ENCODE measurements at regions of chr2 and their contacts with region 1.

Region 1: DNA sequence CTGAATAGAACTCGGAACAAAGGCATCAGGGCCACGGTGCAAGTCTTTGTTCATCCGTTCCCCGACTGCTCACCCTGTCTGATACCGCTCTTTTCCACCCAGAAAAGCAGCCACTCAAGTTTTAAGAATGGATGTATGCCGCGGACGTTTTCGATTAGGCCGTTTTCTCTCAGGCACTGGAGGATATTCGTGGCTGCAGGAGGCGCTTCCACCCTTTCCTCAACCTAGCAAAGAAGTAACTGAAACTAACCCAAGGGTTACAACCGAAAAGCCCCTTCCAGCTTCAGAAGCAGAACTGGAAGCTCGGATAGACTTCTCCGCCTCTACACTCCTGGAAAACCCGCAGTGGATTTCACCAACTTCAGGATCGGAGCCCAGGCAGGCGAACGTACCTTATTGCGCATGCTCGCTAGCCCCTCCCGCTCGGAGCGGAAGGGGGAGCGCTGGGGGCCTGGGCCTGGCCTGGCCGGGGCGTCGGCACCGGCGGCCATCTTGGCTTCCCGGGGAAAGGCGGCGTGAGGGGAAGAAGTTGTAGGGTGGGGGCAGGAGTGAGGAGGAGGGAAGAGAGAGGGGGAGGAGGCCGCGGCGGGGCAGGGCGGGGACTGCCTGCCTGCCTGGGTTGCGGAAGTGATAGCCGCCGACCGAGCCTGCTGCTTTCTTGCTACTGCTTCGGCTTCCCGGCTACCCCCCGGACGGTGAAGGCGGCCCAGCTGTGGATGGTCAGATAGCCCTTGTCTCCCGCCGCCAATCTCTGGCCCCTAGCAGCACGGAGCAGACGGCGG is at the start of gene ACTR3:
- DNase-seq: peak; percentile 99
- H3K4me3 Mint-ChIP-seq: peak within 1 kb of the TSS; percentile 89
- H3K27ac Mint-ChIP-seq: peak within 1 kb of the TSS; percentile 94
- H3K4me1 Mint-ChIP-seq: peaks cover 70% of the 10 kb centered on the region
- H3K27me3 Mint-ChIP-seq: no peaks in the 10 kb centered on the region
- total RNA-seq, gene ACTR3: 653 to 668 TPM

Region 2: DNA sequence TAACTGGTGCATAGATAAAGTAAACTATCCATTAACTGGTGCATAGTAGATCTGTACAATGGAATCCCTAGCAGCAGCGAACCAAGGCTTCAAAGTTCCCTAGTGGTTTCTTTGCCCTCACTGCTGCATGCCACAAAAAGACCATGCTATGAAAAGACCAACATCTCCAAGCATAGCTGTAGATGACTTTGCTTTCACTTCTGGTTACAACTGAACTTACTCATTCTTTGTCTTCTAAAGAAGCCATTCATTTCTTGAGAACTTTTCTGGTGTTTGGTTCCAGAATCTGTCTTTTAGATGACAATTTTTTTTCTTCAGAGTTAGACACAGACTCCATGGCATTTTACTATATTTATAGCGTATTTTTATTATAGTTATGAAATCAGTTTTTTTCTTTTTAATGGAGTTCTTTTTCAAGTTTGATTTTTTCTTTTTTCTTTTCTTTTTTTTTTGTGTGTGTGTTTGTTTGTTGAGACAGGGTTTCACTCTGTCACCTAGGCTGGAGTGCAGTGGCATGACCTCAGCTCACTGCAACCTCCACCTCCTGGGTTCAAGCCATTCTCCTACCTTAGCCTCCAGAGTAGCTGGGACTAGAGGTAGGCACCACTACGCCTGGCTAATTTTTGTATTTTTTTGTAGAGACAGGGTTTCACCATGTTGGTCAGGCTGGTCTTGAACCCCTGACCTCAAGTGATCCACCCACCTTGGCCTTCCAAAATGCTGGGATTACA is 196.8 kb before region 1 on chr2:
- CTCF ChIA-PET with region 1: no interaction called
- POLR2A ChIA-PET with region 1: no interaction called
- intact Hi-C with region 1: loop called (anchors 1 kb)
- DNase-seq: peak; percentile 63
- H3K4me3 Mint-ChIP-seq: peak overlapping the region; percentile 71
- H3K27ac Mint-ChIP-seq: peak overlapping the region; percentile 95
- H3K4me1 Mint-ChIP-seq: peaks cover 42% of the 10 kb centered on the region
- H3K27me3 Mint-ChIP-seq: no peaks in the 10 kb centered on the region

Region 3: GRCh38 chr2:113791697-113792590 is 97.7 kb before region 1 on chr2:
- CTCF ChIA-PET with region 1: interaction called, 3 read pairs
- POLR2A ChIA-PET with region 1: interaction called, 3 read pairs
- intact Hi-C with region 1: loop called (anchors 1 kb)
- DNase-seq: peak; percentile 10
- H3K4me3 Mint-ChIP-seq: peak overlapping the region; percentile 27
- H3K27ac Mint-ChIP-seq: peak overlapping the region; percentile 96
- H3K4me1 Mint-ChIP-seq: peaks cover 32% of the 10 kb centered on the region
- H3K27me3 Mint-ChIP-seq: peaks cover 8% of the 10 kb centered on the region

Region 4: GRCh38 chr2:113848758-113849415 is 40.8 kb before region 1 on chr2:
- CTCF ChIA-PET with region 1: interaction called, 4 read pairs
- POLR2A ChIA-PET with region 1: interaction called, 6 read pairs
- intact Hi-C with region 1: loop called (anchors 1 kb)
- DNase-seq: peak; percentile 70
- H3K4me3 Mint-ChIP-seq: peak overlapping the region; percentile 30
- H3K27ac Mint-ChIP-seq: peak overlapping the region; percentile 87
- H3K4me1 Mint-ChIP-seq: peaks cover 21% of the 10 kb centered on the region
- H3K27me3 Mint-ChIP-seq: no peaks in the 10 kb centered on the region

Region 5: GRCh38 chr2:113876503-113877387 is 12.9 kb before region 1 on chr2:
- CTCF ChIA-PET with region 1: interaction called, 28 read pairs
- POLR2A ChIA-PET with region 1: interaction called, 55 read pairs
- intact Hi-C with region 1: loop called (anchors 1 kb)
- DNase-seq: peak; percentile 93
- H3K4me3 Mint-ChIP-seq: peak overlapping the region; percentile 30
- H3K27ac Mint-ChIP-seq: peak overlapping the region; percentile 84
- H3K4me1 Mint-ChIP-seq: peaks cover 38% of the 10 kb centered on the region
- H3K27me3 Mint-ChIP-seq: no peaks in the 10 kb centered on the region

Region 6: DNA sequence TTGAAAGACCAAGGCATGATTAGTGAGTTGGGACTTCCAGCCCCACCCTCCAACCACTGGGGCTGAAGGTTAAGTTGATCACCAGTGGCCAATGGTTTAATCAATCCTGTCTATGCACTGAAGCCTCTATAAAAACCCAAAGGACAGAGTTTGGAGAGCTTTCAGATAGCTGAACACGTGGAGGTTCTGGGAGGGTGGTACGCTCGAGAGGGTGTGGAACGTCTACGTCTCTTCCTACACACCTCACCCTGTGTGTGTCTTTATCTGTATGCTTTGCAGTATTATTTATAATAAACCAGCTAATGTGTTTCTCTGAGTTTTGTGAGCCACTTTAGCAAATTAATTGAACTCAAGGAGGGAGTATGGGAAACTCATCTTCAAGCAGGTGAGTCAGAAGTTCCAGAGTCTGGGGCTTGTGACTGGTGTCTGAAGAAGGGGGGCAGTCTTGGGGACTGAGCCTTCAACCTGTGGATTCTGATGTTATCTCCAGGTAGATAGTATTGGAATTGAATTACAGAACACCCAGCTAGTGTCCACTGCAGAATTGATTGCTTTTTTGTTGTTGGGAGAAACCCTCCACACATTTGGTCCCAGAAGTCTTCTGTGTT is 20.6 kb after region 1 on chr2:
- CTCF ChIA-PET with region 1: interaction called, 4 read pairs
- POLR2A ChIA-PET with region 1: interaction called, 7 read pairs
- intact Hi-C with region 1: loop called (anchors 2 kb)
- DNase-seq: peak; percentile 67
- H3K4me3 Mint-ChIP-seq: peak overlapping the region; percentile 6
- H3K27ac Mint-ChIP-seq: peak overlapping the region; percentile 21
- H3K4me1 Mint-ChIP-seq: peaks cover 78% of the 10 kb centered on the region
- H3K27me3 Mint-ChIP-seq: no peaks in the 10 kb centered on the region

Region 7: DNA sequence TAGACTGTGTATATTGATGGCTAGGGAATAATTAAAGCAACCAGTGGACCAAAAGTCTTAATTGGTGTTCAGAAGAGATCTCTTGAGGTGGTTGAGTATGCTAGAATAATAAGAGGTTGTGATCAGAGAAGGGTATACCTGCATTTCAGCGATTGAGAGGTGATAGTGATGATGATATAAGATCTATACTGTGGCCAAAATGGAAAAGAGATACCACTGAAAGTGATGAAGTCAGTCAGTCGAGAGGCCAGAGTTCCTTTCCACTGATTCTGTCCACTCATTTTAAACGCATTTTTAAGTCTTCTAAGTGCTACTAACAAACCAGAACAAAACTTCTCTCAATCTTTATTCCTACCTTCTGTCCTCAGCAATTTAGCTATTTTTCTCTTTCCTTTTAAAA is 33.1 kb after region 1 on chr2:
- CTCF ChIA-PET with region 1: no interaction called
- POLR2A ChIA-PET with region 1: no interaction called
- intact Hi-C with region 1: loop called (anchors 2 kb)
- DNase-seq: no peak
- H3K4me3 Mint-ChIP-seq: no peak overlapping the region
- H3K27ac Mint-ChIP-seq: no peak overlapping the region
- H3K4me1 Mint-ChIP-seq: peaks cover 15% of the 10 kb centered on the region
- H3K27me3 Mint-ChIP-seq: no peaks in the 10 kb centered on the region

Region 8: GRCh38 chr2:114354199-114354598 is 464.5 kb after region 1 on chr2:
- CTCF ChIA-PET with region 1: no interaction called
- POLR2A ChIA-PET with region 1: no interaction called
- intact Hi-C with region 1: no loop called
- DNase-seq: no peak
- H3K4me3 Mint-ChIP-seq: no peak overlapping the region
- H3K27ac Mint-ChIP-seq: no peak overlapping the region
- H3K4me1 Mint-ChIP-seq: no peaks in the 10 kb centered on the region
- H3K27me3 Mint-ChIP-seq: no peaks in the 10 kb centered on the region

Measured in activated CD4-positive, alpha-beta memory T cell treated with anti-CD3 and anti-CD28 coated beads for 36 hours (primary cell).